Sciatic nerve (tissue), 2 donors: ENCODE measurements at regions of chr20 and their contacts with region 1.

Region 1: GRCh38 chr20:43983359-43983758 is 68.7 kb downstream of the TOX2 start:
- DNase-seq: no peak
- ATAC-seq: no peak

Region 2: DNA sequence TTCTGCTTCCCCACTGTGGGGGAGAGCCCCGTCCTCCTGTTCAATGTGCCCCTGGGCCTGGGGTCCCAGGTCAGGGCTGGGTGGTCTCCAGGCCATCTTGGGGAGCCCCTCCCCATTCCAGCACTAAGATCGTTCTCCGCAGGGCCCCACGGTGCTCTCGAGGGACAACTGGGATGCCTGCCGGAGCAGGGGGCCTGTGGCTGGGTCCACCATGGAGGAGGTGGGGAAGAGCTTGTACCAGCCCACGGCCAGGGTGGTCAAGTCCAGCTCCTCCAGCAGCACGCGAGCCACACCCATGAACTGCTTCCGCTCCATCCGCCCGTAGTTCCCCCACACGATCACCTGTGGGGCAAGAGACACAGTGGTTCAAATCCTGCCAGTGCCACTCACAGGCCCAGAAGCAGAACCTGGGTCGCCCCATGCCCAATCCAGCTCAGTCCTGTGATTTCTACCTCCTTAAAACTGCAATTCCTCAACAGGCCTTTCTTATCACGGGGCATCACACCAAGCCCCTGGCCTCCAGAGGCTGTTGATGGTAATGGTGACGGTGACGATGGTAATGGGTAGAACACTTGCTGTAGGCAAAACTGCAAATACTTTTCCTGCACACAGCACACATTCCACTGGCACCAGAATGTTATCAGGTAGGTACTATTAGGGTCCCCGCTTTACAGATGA is 772.8 kb after region 1 on chr20:
- intact Hi-C with region 1: loop called (anchors 5 kb)
- DNase-seq: no peak
- ATAC-seq: no peak